Psoas muscle (tissue), 8 donors: ENCODE measurements at regions of chr1 and their contacts with region 1.

Region 1: DNA sequence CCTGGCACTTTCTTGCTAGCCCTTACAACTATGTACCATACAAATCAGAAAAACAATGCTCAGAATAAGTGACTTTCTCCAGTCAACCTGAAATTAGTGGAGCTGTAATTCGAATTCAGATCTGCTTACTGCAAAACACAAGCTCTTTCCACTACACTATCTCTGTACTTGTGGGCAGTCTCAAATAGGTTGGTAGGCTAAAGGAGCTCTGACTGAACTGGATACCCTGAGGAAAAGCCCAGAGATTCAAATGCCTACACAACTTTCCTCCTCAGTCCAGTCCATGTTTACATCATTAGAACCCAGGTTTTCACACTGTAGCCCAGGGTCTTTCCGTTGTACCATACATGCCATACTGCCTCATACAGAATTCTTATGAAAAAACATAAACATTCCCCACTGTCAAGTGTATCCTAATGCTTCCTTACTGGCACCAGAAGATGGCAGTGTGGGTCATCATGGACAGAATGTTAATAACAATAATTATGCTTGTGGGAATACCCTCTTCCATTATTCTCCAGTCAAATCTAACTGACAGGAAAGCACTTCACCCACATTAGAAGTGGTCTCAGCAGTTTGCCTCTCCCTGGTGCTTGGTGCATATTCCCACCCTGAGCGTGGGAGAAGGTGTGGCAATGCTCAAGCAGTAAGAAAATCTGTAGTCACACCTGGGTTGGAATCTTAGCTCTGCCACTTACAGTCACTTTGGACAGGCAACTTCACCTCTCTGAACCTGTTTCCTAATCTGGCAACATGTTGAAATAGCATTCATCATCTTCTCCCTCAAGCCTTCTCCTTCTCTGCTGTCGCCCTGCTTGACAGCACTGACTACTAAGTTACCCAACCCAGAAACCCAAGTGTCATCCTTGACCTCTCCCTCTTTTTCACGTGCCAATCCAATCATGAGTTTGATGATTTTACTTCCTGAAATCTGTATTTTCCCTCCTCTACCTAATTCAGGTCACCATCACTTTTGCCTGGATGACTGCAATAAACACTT is 14.4 kb upstream of the ZFYVE9 start:
- DNase-seq: no peak
- ATAC-seq: peak in 3 of 4 donors; percentile 70 to 90 (median 77)
- H3K4me3 ChIP-seq: no peak overlapping the region
- H3K27ac ChIP-seq: no peak overlapping the region
- H3K4me1 ChIP-seq: no peaks in the 10 kb centered on the region
- H3K27me3 ChIP-seq: no peaks in the 10 kb centered on the region
- CTCF ChIP-seq: peak; percentile 70

Region 2: DNA sequence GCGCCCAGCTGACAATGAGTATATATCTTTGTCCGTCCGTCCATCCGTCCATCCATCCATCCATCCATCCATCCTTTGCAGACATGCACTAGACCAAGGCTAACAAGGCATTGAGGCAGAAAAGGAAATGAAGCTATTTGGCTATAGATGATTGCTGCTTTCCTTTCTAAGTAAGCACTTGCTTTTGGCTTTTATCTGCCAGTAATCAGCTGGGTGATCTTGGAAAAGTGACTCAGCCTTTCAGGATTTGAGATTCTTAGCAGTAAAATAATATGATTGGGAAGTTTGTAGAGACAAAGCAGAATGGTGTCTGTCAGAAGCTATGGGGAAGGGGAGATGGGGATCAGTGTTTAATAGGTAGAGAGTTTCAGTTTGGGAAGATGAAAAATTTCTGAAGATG is 37.1 kb after region 1 on chr1:
- intact Hi-C with region 1: no loop called
- DNase-seq: no peak
- ATAC-seq: no peak
- H3K4me3 ChIP-seq: no peak overlapping the region
- H3K27ac ChIP-seq: no peak overlapping the region
- H3K4me1 ChIP-seq: peaks cover 25% of the 10 kb centered on the region
- H3K27me3 ChIP-seq: no peaks in the 10 kb centered on the region
- CTCF ChIP-seq: no peak

Region 3: GRCh38 chr1:52253401-52253800 is 125.9 kb after region 1 on chr1:
- intact Hi-C with region 1: no loop called
- DNase-seq: no peak
- ATAC-seq: peak in 2 of 4 donors; percentile 26 to 41
- H3K4me3 ChIP-seq: no peak overlapping the region
- H3K27ac ChIP-seq: no peak overlapping the region
- H3K4me1 ChIP-seq: no peaks in the 10 kb centered on the region
- H3K27me3 ChIP-seq: no peaks in the 10 kb centered on the region
- CTCF ChIP-seq: no peak

Region 4: GRCh38 chr1:52296345-52296744 is 168.9 kb after region 1 on chr1:
- intact Hi-C with region 1: loop called (anchors 1 to 2 kb)
- DNase-seq: no peak
- ATAC-seq: peak; percentile 56 to 89 (median 84)
- H3K4me3 ChIP-seq: no peak overlapping the region
- H3K27ac ChIP-seq: no peak overlapping the region
- H3K4me1 ChIP-seq: no peaks in the 10 kb centered on the region
- H3K27me3 ChIP-seq: no peaks in the 10 kb centered on the region
- CTCF ChIP-seq: peak; percentile 71